Activated CD8-positive, alpha-beta memory T cell treated with anti-CD3 and anti-CD28 coated beads, Interleukin-2, amount 10 ng/mL, durations not matched to agents 7 days and 5 days (primary cell): ENCODE measurements at regions of chr3 and their contacts with region 1.

Region 1: DNA sequence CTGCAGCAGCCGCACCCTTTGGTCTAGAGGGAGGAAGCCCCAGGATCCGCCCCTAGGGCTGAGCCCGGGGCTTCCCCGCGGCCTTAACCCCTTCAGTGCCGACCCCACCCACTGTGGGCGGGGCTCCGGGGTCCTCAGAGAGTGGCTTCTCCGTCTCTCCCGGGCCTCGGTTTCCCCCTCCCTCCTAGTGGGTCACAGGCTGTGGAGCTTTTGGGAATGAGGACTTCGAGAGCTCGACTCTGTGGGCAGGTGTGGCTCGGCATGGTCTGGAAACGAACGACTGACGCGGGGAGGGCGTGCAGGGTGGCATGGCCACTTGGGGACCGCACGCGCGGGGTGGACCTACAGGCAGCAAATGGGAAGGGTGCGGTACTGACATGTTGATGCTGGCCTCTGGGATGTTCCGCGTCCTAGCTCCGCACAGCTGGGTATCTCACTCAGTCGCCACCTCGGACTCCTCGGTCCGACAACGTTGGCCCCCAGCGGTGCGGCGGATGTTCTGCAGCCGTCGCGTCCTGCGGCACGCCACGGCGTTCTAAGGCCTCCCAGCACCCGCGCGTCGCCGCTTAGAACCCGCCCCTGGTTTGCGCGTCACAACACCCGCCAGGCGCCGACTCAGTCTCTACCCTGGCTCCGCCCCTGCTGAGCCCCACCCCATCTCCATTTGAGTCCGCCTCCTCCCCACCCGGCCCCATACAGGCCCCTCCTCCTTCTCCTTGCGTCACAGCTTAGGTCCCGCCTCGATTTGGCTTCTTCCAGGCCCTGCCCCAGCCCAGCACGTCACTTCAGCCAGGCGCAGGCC is at the starts of genes HYAL3 and NAA80:
- DNase-seq: peak; percentile 100
- ATAC-seq: peak; percentile 84
- H3K4me3 Mint-ChIP-seq: peak within 1 kb of the TSS; percentile 96
- H3K27ac Mint-ChIP-seq: peak within 1 kb of the TSS; percentile 99
- H3K4me1 Mint-ChIP-seq: peaks cover 23% of the 10 kb centered on the region
- H3K27me3 Mint-ChIP-seq: no peaks in the 10 kb centered on the region
- total RNA-seq, gene HYAL3: 13.0 to 14.3 TPM
- total RNA-seq, gene NAA80: 23.1 to 37.3 TPM

Region 2: DNA sequence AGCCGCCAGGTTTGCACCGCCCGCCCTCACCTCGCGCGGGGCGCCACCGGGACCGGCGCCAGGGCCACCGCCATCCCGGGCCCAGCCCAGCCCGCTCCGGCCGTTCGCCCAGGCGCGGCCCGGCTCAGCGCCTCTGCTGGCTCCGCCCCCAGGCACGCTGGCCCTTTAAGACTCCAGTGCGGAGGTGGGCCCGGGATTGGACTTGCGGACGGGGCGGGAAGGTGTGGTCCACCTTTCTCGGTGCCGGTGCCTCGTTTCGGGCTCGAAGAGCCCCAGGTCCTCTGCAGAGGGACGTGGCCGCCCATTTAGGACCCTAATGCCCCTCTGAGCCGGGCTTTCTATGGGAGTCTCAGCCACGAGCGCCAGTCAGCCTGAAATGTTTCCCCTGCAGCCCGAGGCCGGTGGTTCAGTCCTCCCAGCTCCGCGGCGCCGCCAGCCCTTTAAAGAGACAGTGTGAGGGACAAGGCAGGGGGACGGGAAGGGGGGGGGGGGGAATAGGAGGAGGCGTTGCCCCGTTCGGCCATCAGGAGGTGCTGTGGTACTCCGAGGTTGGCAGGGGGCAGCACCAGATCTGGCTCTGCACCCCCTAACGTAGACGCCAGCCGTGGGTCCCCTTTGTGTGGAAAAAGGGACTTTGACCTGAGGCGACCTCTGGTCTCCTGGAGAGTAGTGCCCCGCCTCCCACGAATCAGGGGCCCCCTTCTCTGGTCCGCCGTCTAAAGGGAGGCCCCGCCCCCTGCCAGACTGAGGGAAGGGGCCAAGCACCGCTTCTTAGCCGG is 22.5 kb after region 1 on chr3:
- CTCF ChIA-PET with region 1: interaction called, 266 read pairs
- DNase-seq: peak; percentile 90
- ATAC-seq: peak; percentile 76
- H3K4me3 Mint-ChIP-seq: peak overlapping the region; percentile 89
- H3K27ac Mint-ChIP-seq: peak overlapping the region; percentile 93
- H3K4me1 Mint-ChIP-seq: peaks cover 37% of the 10 kb centered on the region
- H3K27me3 Mint-ChIP-seq: no peaks in the 10 kb centered on the region